Caco-2 (cell line): ENCODE measurements at regions of chr2 and their contacts with region 1.

Region 1: DNA sequence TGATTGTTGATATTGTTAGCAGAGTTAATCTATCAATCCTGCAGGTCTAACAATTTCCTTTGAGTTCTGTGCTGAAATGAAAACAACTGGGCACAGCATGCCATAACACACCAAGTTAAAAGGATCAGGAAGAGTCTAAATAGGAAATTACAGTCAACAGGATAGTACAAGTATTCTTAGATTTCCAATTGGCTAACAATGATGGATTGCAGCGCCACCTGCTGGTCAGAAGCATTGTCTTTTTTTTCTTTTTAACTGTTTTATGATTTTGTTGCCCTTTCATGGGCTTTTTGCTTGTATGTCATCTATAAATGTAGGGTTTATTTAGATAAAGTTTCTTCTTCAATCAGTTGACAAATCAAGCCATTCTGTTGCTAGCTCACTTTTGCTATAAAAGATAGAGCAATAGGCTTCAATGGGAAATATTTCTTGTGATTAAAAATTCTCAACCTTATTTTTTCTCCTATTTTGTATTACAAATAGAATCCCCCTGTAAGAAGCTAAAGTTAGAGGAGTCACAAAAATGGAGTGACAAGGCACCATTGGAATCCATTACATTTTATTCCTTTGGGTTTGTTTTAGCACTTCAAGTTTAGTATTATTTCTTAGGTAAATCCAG is 40.8 kb upstream of the RPRM start:
- DNase-seq: peak in 1 of 2 experiments; percentile 55
- H3K4me3 ChIP-seq: no peak overlapping the region
- H3K4me3 Mint-ChIP-seq: no peak overlapping the region
- H3K27ac Mint-ChIP-seq: no peak overlapping the region
- H3K4me1 ChIP-seq: no peaks in the 10 kb centered on the region
- H3K4me1 Mint-ChIP-seq: no peaks in the 10 kb centered on the region
- H3K27me3 ChIP-seq: no peaks in the 10 kb centered on the region
- H3K27me3 Mint-ChIP-seq: peaks cover 5% of the 10 kb centered on the region
- CTCF ChIP-seq: peak; percentile 66 to 79

Region 2: DNA sequence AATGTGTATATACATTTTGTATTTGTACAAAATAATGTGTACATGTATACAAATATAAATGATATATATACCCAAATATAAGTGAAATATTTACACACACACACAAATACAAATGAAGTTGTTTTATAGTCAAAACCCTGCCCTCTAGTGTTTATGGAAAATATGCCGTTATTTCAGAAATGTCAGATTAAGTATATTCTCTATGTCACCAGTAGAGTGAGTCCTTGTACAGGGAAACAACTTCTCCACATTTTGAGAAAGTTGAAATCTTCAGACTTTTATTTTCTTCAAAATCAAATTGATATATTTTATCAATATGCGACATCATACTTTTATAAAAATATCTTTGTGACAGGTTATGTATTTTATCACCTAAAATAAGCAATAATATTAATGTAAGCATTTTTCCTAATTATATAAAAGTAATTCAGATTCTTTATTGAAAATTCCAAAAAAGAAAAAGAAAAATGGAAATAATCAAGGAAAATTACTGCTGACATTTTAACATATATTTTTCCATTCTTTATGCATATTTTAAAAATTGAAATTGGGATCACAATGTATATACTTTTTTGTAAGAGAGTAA is 778.5 kb before region 1 on chr2:
- CTCF ChIA-PET with region 1: no interaction called
- POLR2A ChIA-PET with region 1: no interaction called
- intact Hi-C with region 1: loop called (anchors 1 kb)
- DNase-seq: peak in 1 of 2 experiments; percentile 42
- H3K4me3 ChIP-seq: no peak overlapping the region
- H3K4me3 Mint-ChIP-seq: no peak overlapping the region
- H3K27ac Mint-ChIP-seq: no peak overlapping the region
- H3K4me1 ChIP-seq: no peaks in the 10 kb centered on the region
- H3K4me1 Mint-ChIP-seq: no peaks in the 10 kb centered on the region
- H3K27me3 ChIP-seq: no peaks in the 10 kb centered on the region
- H3K27me3 Mint-ChIP-seq: no peaks in the 10 kb centered on the region
- CTCF ChIP-seq: peak; percentile 80 to 89

Region 3: DNA sequence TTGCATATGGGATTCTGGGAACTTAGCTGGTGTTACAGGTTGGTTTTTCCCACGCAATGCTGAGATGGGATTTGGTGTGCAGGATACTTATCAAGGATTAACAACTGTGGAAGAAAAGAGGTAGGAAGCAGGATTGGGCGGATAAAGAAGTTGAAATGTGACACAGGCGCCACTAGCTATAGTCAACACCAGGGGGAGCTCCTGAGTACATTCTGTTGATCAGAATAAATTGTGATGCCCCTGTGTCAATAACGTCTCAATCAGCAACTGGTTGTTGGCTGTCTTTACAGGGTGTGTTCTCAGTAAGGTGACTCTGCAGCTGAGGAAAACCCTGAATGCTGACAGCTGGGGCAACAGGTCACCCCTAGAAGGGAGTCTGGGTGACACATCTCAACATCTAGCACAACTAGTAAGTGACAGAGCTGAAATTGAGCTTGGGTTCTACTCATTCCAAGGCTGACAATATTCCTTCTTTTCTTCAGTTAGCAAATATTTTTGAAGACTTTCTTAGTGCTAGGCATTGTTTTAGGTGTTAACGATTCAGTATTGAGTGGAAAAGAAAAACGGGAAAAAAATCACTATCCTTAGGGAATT is 657.9 kb before region 1 on chr2:
- CTCF ChIA-PET with region 1: no interaction called
- POLR2A ChIA-PET with region 1: no interaction called
- intact Hi-C with region 1: loop called (anchors 5 kb)
- DNase-seq: peak in 1 of 2 experiments; percentile 44
- H3K4me3 ChIP-seq: no peak overlapping the region
- H3K4me3 Mint-ChIP-seq: no peak overlapping the region
- H3K27ac Mint-ChIP-seq: no peak overlapping the region
- H3K4me1 ChIP-seq: no peaks in the 10 kb centered on the region
- H3K4me1 Mint-ChIP-seq: no peaks in the 10 kb centered on the region
- H3K27me3 ChIP-seq: no peaks in the 10 kb centered on the region
- H3K27me3 Mint-ChIP-seq: no peaks in the 10 kb centered on the region
- CTCF ChIP-seq: peak; percentile 38 to 56

Region 4: GRCh38 chr2:152925547-152926327 is 593.6 kb before region 1 on chr2:
- CTCF ChIA-PET with region 1: no interaction called
- POLR2A ChIA-PET with region 1: no interaction called
- intact Hi-C with region 1: loop called (anchors 5 kb)
- DNase-seq: peak; percentile 73 to 79
- H3K4me3 ChIP-seq: no peak overlapping the region
- H3K4me3 Mint-ChIP-seq: no peak overlapping the region
- H3K27ac Mint-ChIP-seq: no peak overlapping the region
- H3K4me1 ChIP-seq: no peaks in the 10 kb centered on the region
- H3K4me1 Mint-ChIP-seq: no peaks in the 10 kb centered on the region
- H3K27me3 ChIP-seq: no peaks in the 10 kb centered on the region
- H3K27me3 Mint-ChIP-seq: peaks cover 11% of the 10 kb centered on the region
- CTCF ChIP-seq: peak; percentile 65 to 90

Region 5: DNA sequence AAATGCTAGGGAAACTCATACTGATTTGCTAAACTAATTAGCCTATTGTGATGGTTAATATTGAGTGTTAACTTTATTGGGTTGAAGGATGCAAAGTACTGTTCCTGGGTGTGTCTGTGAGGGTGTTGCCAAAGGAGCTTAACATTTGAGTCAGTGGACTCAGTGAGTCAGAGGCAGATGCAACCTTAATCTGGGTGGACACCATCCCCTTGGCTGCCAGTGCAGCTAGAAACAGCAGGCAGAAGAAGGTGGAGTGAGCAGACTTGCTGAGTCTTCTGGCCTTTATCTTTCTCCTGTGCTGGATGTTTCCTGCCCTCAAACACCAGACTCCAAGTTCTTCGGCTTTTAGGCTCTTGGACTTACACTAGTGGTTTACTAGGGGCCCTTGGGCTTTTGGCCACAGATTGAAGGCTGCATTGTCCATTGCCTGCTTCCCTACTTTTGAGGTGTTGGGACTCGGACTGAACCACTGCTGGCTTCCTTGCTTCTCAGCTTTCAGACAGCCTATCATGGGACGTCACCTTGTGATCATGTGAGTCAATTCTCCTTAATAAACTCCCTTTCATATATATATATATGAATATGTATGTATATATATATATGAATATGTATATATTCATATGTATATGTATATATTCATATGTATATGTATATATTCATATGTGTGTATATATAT is 110.5 kb before region 1 on chr2:
- CTCF ChIA-PET with region 1: no interaction called
- POLR2A ChIA-PET with region 1: no interaction called
- intact Hi-C with region 1: no loop called
- DNase-seq: no peak
- H3K4me3 ChIP-seq: no peak overlapping the region
- H3K4me3 Mint-ChIP-seq: no peak overlapping the region
- H3K27ac Mint-ChIP-seq: no peak overlapping the region
- H3K4me1 ChIP-seq: no peaks in the 10 kb centered on the region
- H3K4me1 Mint-ChIP-seq: no peaks in the 10 kb centered on the region
- H3K27me3 ChIP-seq: no peaks in the 10 kb centered on the region
- H3K27me3 Mint-ChIP-seq: no peaks in the 10 kb centered on the region
- CTCF ChIP-seq: no peak